ENCODE measurements at regions of chr7 and their contacts with region 1.

Region 1: DNA sequence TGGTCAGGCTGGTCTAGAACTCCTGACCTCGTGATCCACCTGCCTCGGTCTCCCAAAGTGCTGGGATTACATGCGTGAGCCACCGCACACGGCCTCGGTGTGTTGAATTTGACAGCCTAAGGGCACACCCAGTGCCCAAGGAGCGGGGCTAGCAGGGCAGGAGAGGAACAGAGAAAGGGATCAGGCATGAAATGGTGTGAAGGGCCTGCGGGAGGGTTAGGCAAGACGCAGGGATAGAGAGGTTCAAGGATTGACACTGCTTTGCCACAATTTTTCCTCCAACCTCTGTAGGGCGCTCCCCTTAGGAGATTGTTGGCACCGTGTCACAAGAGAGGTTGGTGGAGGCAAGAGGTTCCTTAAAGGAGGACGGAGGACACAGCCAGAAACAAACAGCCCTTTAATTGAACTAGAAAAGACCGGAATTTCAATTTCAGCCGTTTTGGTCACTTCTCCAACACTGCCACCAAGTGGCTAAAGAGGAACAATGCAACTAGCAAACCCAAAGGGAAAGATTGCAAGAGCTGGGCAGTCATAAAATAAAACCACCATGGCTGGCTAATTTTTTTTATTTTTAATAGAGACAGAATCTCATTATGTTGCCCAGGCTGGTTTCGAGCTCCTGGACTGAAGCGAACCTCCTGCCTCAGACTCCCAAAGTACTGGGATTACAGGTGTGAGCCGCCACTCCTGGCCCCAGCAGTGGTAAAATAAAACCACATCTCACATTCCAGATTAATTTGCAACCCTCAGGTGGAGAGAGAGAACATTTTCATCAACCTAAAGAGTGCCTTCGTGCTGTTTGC is 6.9 kb upstream of the CREB3L2 start:
- DNase-seq: peak; percentile 16
- H3K27ac ChIP-seq: no peak overlapping the region
- CTCF ChIP-seq: peak; percentile 91

Region 2: DNA sequence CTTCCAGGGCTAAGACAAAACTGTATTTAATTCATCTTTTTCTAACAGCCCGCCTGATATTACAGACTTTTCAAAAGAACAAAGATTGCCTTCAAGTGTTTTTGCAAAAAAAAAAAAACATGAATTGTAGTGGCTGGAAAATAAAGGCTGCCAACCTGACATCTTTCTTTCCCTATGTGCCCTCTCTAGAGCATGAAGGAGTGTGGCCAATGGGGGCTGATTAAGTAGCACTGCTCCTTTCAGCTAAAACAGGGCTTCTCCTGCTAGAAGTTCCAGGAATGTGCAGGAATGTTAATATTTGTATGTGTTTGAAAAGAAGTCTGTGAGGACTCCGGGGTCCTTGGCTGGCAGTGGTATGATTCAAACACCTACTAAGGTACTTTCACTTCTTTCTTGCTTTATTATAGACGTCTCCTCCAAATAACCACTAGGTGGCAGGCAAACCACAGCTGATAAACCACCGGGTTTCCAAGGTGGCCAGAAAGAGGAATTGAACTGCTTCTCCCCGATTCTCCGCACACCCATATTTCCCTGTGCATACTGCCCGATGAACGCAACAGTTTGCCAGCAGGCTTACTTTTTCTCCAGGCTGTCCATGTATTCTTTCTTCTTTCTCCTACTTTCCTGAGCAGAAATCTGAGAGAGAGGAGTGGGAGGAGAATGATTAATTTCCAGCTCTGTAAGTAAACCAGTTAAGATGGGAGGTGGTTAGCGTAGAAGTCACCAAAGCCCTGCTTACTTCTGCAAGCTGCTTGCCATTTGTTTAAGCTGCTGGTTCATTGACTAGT is 105.2 kb before region 1 on chr7:
- CTCF ChIA-PET with region 1: interaction called, 15 read pairs
- POLR2A ChIA-PET with region 1: no interaction called
- DNase-seq: peak; percentile 55
- H3K27ac ChIP-seq: peak overlapping the region; percentile 7
- CTCF ChIP-seq: peak; percentile 86

Measured in RWPE1 (cell line).